Dendritic cell treated with granulocyte-macrophage colony-stimulating factor and Interleukin-4, amounts not matched to agents 40 ng/mL and 50 ng/mL, for 4 days (primary cell): ENCODE measurements at regions of chr2 and their contacts with region 1.

Region 1: GRCh38 chr2:222903234-222904220 is 42.7 kb downstream of the ACSL3 start:
- H3K4me3 Mint-ChIP-seq: no peak overlapping the region
- H3K27ac Mint-ChIP-seq: no peak overlapping the region
- H3K4me1 Mint-ChIP-seq: peaks cover 34% of the 10 kb centered on the region
- H3K27me3 Mint-ChIP-seq: no peaks in the 10 kb centered on the region

Region 2: GRCh38 chr2:222690564-222691200 is 212.8 kb before region 1 on chr2:
- intact Hi-C with region 1: loop called (anchors 1 kb)
- H3K4me3 Mint-ChIP-seq: no peak overlapping the region
- H3K27ac Mint-ChIP-seq: no peak overlapping the region
- H3K4me1 Mint-ChIP-seq: peaks cover 16% of the 10 kb centered on the region
- H3K27me3 Mint-ChIP-seq: no peaks in the 10 kb centered on the region

Region 3: DNA sequence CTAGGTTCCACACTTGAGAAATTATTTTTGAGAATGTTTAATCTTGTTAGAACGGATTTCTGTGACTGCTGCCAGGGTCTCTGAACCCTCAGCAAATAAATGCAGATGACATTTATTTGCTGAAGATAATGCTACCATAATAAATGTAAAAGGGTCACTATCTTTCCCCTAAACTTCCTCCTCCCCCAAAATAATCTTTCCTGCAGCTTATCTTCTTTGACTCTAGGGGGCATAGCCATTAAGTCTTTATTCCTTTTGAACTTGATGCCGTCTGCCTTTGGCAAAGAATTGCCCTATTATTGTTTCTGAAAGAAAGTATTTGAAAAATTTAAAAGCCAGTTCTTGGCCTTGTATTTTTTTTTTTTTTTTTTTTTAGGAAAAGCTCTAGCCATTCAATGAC is 106.3 kb before region 1 on chr2:
- intact Hi-C with region 1: loop called (anchors 5 kb)
- H3K4me3 Mint-ChIP-seq: no peak overlapping the region
- H3K27ac Mint-ChIP-seq: peak overlapping the region; percentile 80
- H3K4me1 Mint-ChIP-seq: peaks cover 52% of the 10 kb centered on the region
- H3K27me3 Mint-ChIP-seq: no peaks in the 10 kb centered on the region

Region 4: DNA sequence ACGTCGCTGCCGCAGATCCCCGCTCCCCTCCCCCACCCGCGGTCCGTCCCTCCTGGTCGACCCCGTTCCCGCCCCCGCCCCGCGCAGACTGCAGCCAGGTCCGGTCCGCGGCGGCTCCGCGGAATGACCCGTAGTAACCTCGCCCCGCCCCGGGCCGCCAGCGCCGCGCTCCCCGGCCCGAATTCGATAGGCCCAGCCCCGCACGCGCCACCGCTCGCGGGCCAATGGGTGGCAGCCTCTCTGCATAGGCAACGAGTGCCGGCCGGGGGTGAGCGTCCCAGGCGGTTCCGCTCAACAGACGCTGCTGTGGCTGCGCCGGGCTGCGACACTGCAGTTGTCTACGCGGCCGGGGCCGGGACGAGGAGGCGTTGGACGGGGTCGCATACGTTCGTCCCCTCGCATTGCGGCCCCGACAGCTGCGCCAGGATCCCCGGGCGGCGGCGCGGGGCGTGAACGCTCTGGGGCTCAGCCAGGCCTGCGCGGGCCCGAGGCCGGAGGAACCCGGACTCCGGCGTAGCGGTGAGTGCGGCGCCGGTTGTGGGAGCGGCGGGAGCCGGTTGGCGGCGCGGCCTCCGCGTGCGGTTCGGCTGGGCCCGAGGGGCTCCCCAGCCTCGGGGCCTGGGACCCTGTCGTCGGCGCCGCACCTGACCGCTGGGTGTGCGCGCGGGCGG is 42.7 kb before region 1 on chr2 and contains the start of gene ACSL3:
- intact Hi-C with region 1: loop called (anchors 5 kb)
- H3K4me3 Mint-ChIP-seq: peak within 1 kb of the TSS; percentile 20
- H3K27ac Mint-ChIP-seq: no peak within 1 kb of the TSS
- H3K4me1 Mint-ChIP-seq: peaks cover 15% of the 10 kb centered on the region
- H3K27me3 Mint-ChIP-seq: no peaks in the 10 kb centered on the region